GM10248 (cell line): ENCODE measurements at regions of chr19 and their contacts with region 1.

Region 1: GRCh38 chr19:41064974-41065569 is 23.2 kb upstream of the CYP2A13 start:
- DNase-seq: no peak
- CTCF ChIP-seq: no peak

Region 2: DNA sequence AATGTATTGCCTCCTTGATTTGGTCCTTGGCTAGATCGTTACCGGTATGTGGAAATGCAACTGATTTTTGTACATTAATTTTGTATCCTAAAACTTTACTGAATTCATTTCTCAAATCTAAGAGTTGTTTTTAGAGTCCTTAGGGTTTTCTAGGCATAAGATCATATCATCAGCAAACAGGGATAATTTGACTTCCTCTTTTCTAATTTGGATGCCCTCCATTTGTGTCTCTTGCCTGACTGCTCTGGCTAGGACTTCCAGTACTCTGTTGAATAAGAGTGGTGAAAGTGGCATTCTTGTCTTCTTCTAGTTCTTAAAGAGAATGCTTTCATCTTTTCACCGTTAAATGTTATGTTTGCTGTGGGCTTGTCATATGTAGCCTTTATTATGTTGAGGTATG is 11.2 kb after region 1 on chr19:
- CTCF ChIA-PET with region 1: interaction called, 4 read pairs
- POLR2A ChIA-PET with region 1: interaction called, 14 read pairs
- DNase-seq: no peak
- CTCF ChIP-seq: no peak